GM12878 (cell line): ENCODE measurements at regions of chr16 and their contacts with region 1.

Region 1: DNA sequence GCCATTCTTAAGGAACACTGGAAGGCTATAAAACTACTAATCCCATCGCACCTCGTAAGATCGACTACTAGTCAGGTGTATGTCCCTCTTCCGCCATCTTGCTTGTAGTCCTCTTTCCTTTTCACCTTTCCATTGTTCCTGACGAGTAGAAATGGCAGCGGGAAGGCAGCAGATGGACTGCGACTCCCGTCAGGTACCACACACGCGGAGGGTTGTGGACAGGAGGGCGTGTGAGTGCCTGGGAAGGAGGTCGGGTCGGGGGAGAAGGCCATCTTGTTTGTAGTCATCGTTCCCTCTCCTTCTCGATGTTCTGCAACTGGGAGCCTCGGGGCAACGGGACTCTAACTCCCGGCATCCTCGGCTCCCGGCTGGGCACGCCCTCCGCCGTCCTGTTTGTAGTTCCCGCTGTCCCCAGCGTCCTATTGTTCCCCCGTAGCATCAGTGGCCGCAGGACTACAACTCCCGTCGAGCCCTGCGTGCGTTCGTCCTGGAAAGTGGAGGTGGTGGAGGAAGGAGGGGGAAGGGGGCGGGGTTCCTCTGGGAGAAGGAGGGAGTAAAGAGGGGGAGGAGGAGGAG is 324 bp upstream of the FBXL19 start:
- DNase-seq: peak; percentile 98
- ATAC-seq: peak; percentile 82
- H3K4me3 ChIP-seq: peak overlapping the region; percentile 80
- H3K27ac ChIP-seq: peak overlapping the region; percentile 89
- H3K4me1 ChIP-seq: peaks cover 4% of the 10 kb centered on the region; the same call in 1 of the 2 replicates
- H3K27me3 ChIP-seq: no peaks in the 10 kb centered on the region
- CTCF ChIP-seq: no peak
- EP300 ChIP-seq: no peak
- POLR2A ChIP-seq: peak; percentile 72
- RAD21 ChIP-seq: no peak

Region 2: DNA sequence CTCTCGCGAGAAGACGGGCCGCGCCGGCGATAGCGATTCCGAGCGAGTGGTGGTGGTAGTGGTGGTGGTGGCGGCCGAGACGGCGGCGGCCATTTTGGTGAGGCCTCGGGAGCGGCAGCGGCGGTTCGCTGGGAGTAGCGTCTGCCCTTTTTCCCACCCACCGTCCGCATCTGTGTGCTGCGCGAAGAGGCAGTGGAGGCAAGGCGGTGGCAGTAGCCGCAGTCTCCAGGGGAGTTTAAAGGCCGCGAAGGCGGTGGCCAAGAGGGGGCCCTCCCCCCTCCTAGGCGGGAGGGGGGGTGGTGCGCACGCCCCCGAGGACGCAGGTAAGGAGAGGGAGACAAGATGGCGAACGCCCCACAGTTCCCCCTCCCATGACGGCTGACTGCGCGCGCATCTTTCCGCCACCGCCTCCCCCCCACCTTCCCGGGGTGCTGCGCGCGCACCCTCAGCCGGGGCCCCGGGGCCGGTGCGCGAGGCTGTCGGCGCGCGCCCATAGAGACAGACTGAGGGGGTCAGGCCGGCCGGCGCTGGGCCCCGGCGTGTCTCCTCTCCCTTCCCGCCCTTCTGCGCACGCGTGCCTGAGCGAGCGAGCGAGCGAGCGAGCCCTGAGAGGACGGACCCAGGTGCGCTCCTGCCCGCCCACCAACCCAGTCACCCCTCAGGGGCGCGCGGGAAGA is 224.8 kb before region 1 on chr16:
- CTCF ChIA-PET with region 1: no interaction called
- POLR2A ChIA-PET with region 1: no interaction called
- RAD21 ChIA-PET with region 1: no interaction called
- SMC1A ChIA-PET with region 1: interaction called, 3 read pairs
- in situ Hi-C with region 1: no loop called
- intact Hi-C with region 1: loop called (anchors 10 kb)
- DNase-seq: peak; percentile 89
- ATAC-seq: peak; percentile 82
- H3K4me3 ChIP-seq: peak overlapping the region; percentile 78
- H3K27ac ChIP-seq: peak overlapping the region; percentile 98
- H3K4me1 ChIP-seq: peaks cover 10% of the 10 kb centered on the region
- H3K27me3 ChIP-seq: no peaks in the 10 kb centered on the region
- CTCF ChIP-seq: no peak
- EP300 ChIP-seq: peak in 1 of 2 experiments; percentile 57; a peak in 1 of 4 replicates
- POLR2A ChIP-seq: peak; percentile 95
- RAD21 ChIP-seq: no peak

Region 3: GRCh38 chr16:30710971-30711370 is 212.1 kb before region 1 on chr16:
- CTCF ChIA-PET with region 1: no interaction called
- POLR2A ChIA-PET with region 1: no interaction called
- RAD21 ChIA-PET with region 1: no interaction called
- SMC1A ChIA-PET with region 1: no interaction called
- in situ Hi-C with region 1: no loop called
- intact Hi-C with region 1: no loop called
- DNase-seq: no peak
- ATAC-seq: no peak
- H3K4me3 ChIP-seq: no peak overlapping the region
- H3K27ac ChIP-seq: no peak overlapping the region
- H3K4me1 ChIP-seq: no peaks in the 10 kb centered on the region; the same call in 1 of the 2 replicates
- H3K27me3 ChIP-seq: no peaks in the 10 kb centered on the region
- CTCF ChIP-seq: no peak
- EP300 ChIP-seq: no peak
- POLR2A ChIP-seq: no peak
- RAD21 ChIP-seq: no peak

Region 4: DNA sequence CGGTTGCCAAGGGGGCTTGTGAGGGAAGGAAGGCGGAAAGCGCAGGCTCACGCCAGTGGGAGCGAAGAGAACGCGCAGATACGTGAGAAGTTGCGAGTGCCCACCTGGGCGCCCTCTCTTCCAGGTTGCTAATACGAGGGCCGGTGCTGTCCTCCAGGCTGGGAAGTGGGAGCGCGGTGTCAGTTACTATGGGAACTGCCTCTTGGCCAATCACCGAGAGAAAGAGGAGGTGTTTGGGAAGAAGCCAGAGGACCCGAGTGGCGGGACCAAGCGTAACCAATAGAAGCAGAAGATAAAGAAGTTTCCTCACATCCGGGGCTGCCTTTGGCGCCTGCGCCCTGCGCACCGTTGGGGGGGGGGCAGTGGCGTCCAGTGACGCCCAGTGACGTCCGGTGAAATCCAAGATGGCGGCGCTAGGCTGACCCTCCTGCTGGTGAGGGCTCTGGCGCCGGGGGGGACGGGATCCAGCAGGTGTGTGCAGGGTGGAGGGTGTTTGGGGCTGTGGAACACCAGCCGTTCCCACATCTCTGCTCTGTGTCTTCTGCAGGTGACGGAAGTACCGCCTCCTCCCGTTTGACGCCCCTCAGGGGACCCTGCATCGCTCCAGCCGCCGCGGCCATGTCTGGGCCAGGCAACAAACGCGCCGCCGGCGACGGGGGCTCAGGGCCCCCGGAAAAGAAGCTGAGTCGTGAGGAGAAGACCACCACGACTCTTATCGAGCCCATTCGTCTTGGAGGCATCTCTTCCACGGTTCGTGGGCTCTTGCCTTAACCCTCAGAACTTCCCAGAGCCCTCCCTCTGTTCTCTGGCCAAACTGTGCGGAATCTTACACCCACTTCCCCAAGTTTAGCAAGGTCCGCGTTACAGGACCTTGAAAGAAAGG is 160.9 kb before region 1 on chr16 and contains the starts of genes CFAP119 and RNF40:
- CTCF ChIA-PET with region 1: no interaction called
- POLR2A ChIA-PET with region 1: interaction called, 3 read pairs
- RAD21 ChIA-PET with region 1: no interaction called
- SMC1A ChIA-PET with region 1: no interaction called
- in situ Hi-C with region 1: no loop called
- intact Hi-C with region 1: loop called (anchors 5 kb)
- DNase-seq: peak; percentile 88
- ATAC-seq: peak; percentile 95
- H3K4me3 ChIP-seq: peak within 1 kb of the TSS; percentile 83
- H3K27ac ChIP-seq: peak within 1 kb of the TSS; percentile 74
- H3K4me1 ChIP-seq: peaks cover 9% of the 10 kb centered on the region
- H3K27me3 ChIP-seq: no peaks in the 10 kb centered on the region
- CTCF ChIP-seq: 0 out of 6 replicates have a peak, but pooled peaks of 1 of the 3 experiments have one; percentile 6
- EP300 ChIP-seq: no peak
- POLR2A ChIP-seq: peak; percentile 93
- RAD21 ChIP-seq: no peak
- polyA plus RNA-seq, gene CFAP119: 3.2 to 3.9 TPM
- polyA plus RNA-seq, gene RNF40: 3.7 to 8.0 TPM

Region 5: GRCh38 chr16:30775392-30776188 is 147.5 kb before region 1 on chr16:
- CTCF ChIA-PET with region 1: no interaction called
- POLR2A ChIA-PET with region 1: no interaction called
- RAD21 ChIA-PET with region 1: no interaction called
- SMC1A ChIA-PET with region 1: no interaction called
- in situ Hi-C with region 1: no loop called
- intact Hi-C with region 1: loop called (anchors 2 kb)
- DNase-seq: no peak
- ATAC-seq: peak; percentile 91
- H3K4me3 ChIP-seq: peak overlapping the region; percentile 78
- H3K27ac ChIP-seq: peak overlapping the region; percentile 69
- H3K4me1 ChIP-seq: no peaks in the 10 kb centered on the region
- H3K27me3 ChIP-seq: no peaks in the 10 kb centered on the region
- CTCF ChIP-seq: no peak
- EP300 ChIP-seq: no peak
- POLR2A ChIP-seq: peak; percentile 86
- RAD21 ChIP-seq: no peak

Region 6: DNA sequence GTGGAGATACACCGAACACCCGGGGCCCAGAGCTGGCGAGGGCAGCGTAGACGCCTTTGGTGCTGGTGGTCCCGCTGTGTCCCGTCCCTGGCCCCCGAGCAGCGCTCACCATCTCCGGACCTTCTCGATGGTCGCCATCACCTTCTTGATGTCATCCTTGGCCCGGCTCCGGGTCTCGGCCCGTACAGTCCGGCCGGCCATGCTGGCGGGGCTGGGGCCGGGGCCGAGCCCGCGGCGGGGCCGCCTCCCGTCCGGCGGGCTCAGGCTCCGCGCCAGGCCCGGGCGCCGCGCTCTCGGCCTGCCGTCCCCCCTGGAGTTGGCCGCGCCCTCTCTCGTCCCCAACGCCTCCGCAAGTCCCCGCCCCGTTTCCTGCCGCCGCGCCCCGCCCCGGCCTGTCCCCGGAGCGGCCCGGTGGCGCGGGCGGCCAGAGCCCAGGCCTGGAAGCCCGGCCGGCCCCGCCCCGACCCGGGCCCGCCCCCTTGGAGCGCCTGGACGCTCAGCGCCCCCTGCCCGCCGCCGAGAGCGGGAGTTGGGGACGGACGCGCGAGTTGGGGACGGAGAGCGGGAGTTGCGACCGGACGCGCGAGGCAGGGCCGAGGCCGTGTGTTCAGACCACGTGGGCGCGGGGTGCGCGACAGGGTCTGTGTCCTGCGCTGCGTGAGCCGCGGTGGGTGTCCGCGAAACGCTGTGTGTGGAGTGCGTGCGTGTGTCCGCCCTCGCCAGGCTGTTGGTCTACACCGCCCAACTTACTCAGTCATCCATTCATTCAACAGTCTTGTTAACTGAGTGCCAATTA is 29.1 kb before region 1 on chr16 and contains the start of gene BCL7C:
- CTCF ChIA-PET with region 1: interaction called, 3 read pairs
- POLR2A ChIA-PET with region 1: interaction called, 3 read pairs
- RAD21 ChIA-PET with region 1: no interaction called
- SMC1A ChIA-PET with region 1: no interaction called
- in situ Hi-C with region 1: no loop called
- intact Hi-C with region 1: loop called (anchors 2 kb)
- DNase-seq: no peak
- ATAC-seq: peak; percentile 90
- H3K4me3 ChIP-seq: peak within 1 kb of the TSS; percentile 93
- H3K27ac ChIP-seq: peak within 1 kb of the TSS; percentile 58
- H3K4me1 ChIP-seq: peaks cover 25% of the 10 kb centered on the region
- H3K27me3 ChIP-seq: no peaks in the 10 kb centered on the region
- CTCF ChIP-seq: peak; percentile 26 to 69 (median 45); a peak in 4 of 6 replicates
- EP300 ChIP-seq: no peak
- POLR2A ChIP-seq: peak; percentile 75
- RAD21 ChIP-seq: peak; percentile 45
- polyA plus RNA-seq, gene BCL7C: 1.1 to 2.1 TPM

Region 7: GRCh38 chr16:30941600-30942425 is 18.8 kb after region 1 on chr16:
- CTCF ChIA-PET with region 1: interaction called, 26 read pairs
- POLR2A ChIA-PET with region 1: interaction called, 8 read pairs
- RAD21 ChIA-PET with region 1: interaction called, 11 read pairs
- SMC1A ChIA-PET with region 1: interaction called, 5 read pairs
- in situ Hi-C with region 1: no loop called
- intact Hi-C with region 1: no loop called
- DNase-seq: no peak
- ATAC-seq: peak; percentile 99
- H3K4me3 ChIP-seq: no peak overlapping the region
- H3K27ac ChIP-seq: no peak overlapping the region
- H3K4me1 ChIP-seq: peaks cover 9% of the 10 kb centered on the region
- H3K27me3 ChIP-seq: no peaks in the 10 kb centered on the region
- CTCF ChIP-seq: peak; percentile 94 to 99 (median 95)
- EP300 ChIP-seq: no peak
- POLR2A ChIP-seq: no peak
- RAD21 ChIP-seq: peak; percentile 67

Region 8: GRCh38 chr16:31077592-31078396 is 154.7 kb after region 1 on chr16:
- CTCF ChIA-PET with region 1: no interaction called
- POLR2A ChIA-PET with region 1: no interaction called
- RAD21 ChIA-PET with region 1: no interaction called
- SMC1A ChIA-PET with region 1: no interaction called
- in situ Hi-C with region 1: no loop called
- intact Hi-C with region 1: no loop called
- DNase-seq: no peak
- ATAC-seq: no peak
- H3K4me3 ChIP-seq: no peak overlapping the region
- H3K27ac ChIP-seq: no peak overlapping the region
- H3K4me1 ChIP-seq: no peaks in the 10 kb centered on the region; the same call in 1 of the 2 replicates
- H3K27me3 ChIP-seq: no peaks in the 10 kb centered on the region
- CTCF ChIP-seq: no peak
- EP300 ChIP-seq: no peak
- POLR2A ChIP-seq: no peak
- RAD21 ChIP-seq: no peak

Region 9: GRCh38 chr16:31298967-31299366 is 375.9 kb after region 1 on chr16:
- CTCF ChIA-PET with region 1: no interaction called
- POLR2A ChIA-PET with region 1: no interaction called
- RAD21 ChIA-PET with region 1: no interaction called
- SMC1A ChIA-PET with region 1: no interaction called
- in situ Hi-C with region 1: no loop called
- intact Hi-C with region 1: no loop called
- DNase-seq: peak; percentile 15
- ATAC-seq: peak; percentile 56
- H3K4me3 ChIP-seq: no peak overlapping the region
- H3K27ac ChIP-seq: no peak overlapping the region
- H3K4me1 ChIP-seq: peaks cover 4% of the 10 kb centered on the region; the same call in 1 of the 2 replicates
- H3K27me3 ChIP-seq: no peaks in the 10 kb centered on the region
- CTCF ChIP-seq: peak; percentile 44 to 57 (median 48); a peak in 5 of 6 replicates
- EP300 ChIP-seq: no peak
- POLR2A ChIP-seq: no peak
- RAD21 ChIP-seq: peak; percentile 59